BJ (cell line): ENCODE measurements at regions of chr5 and their contacts with region 1.

Region 1: GRCh38 chr5:77272206-77272605 is 61.7 kb downstream of the PDE8B start:
- DNase-seq: no peak
- H3K4me3 ChIP-seq: no peak overlapping the region
- H3K27me3 ChIP-seq: no peaks in the 10 kb centered on the region
- CTCF ChIP-seq: no peak

Region 2: DNA sequence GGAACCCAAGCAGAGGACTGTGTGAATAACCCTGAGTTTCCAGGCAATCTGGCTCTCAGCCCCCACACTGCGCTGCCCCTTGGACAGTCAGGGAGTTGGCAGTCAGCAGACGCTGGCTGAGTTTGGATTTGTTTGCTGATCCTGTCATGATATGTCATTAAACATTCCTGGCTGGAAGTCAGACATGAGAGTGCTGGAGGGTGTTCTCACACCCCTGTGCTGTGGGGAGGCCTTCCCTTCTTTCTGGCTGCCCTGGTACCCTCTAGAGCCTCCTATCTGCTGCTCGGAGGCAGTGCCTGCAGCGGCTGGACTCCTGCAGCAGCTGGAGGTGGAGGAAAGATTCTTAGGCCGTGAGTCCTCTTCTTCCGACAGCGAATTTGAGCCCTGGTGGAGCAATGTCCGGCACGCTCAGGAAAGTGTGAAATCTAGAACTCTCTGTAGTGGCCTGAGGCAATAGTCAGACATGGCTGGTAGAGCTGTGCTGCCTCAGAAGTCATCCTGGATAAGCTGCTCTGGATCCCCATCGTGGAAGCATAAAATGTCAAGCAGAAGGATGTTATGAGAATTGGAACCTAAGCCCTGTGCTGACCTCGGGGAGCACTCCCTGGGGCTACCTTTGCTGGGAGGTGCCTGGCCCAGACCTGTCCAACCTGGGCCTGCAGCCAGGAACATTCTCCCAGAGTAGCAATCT is 10.3 kb after region 1 on chr5:
- CTCF ChIA-PET with region 1: interaction called, 10 read pairs
- POLR2A ChIA-PET with region 1: no interaction called
- DNase-seq: peak; percentile 58
- H3K4me3 ChIP-seq: no peak overlapping the region
- H3K27me3 ChIP-seq: no peaks in the 10 kb centered on the region
- CTCF ChIP-seq: peak; percentile 81